CD8-positive, alpha-beta T cell (primary cell): ENCODE measurements at regions of chr15 and their contacts with region 1.

Region 1: DNA sequence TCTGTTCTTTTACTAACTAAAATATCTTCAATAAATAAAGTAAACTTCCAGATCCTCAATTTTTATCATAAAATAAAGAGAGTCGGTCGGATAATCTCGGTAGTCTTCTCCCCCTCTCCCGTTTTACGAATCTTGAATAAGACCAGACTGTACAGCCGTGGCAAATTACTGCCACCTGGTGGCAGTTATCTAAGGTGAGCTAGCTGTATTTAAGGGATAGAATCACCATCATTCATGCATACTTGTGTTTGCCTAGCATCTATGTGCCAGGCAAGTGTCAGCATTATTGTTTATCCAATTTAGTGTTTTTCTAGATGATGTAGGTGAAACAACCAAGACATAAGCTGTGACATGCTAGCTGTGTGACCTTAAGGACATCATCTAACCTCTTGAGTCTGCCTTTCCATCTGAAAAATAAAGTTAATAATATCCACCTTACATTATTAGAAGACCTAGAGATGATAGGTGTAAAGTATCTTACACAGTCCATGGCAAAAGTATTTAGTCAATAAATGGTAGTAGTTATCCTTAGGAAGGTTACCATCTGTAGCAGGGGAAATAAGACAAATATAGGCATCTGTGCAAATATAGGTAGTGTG is 21.3 kb downstream of the DUT start:
- DNase-seq: peak; percentile 8 to 74 (median 49)
- ATAC-seq: peak; percentile 70
- H3K4me3 ChIP-seq: no peak overlapping the region
- H3K4me3 Mint-ChIP-seq: no peak overlapping the region
- H3K27ac ChIP-seq: no peak overlapping the region
- H3K27ac Mint-ChIP-seq: no peak overlapping the region
- H3K4me1 ChIP-seq: no peaks in the 10 kb centered on the region
- H3K4me1 Mint-ChIP-seq: peaks cover 2% of the 10 kb centered on the region
- H3K27me3 ChIP-seq: no peaks in the 10 kb centered on the region
- H3K27me3 Mint-ChIP-seq: peaks cover 6% of the 10 kb centered on the region
- CTCF ChIP-seq: peak; percentile 75

Region 2: DNA sequence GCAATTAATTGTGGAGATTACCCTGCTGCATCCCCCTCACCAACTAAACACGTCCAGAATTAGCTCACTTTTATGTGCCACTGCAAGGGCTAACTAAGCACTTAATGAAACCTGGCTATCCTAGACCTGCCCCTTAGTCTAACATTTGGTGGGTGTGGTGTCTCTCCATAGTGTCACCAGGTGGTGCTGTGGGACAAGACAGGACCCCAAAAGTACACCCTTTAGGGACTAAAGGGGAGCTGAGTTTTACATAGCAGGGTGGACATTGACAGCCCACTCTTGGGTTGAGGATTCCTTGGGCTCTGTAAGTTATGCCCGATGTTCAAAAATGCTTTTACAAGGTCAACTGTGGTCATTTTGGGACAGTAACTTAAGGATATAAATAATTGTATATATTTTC is 15.6 kb before region 1 on chr15:
- CTCF ChIA-PET with region 1: interaction called, 28 read pairs
- POLR2A ChIA-PET with region 1: no interaction called
- intact Hi-C with region 1: loop called (anchors 1 kb)
- DNase-seq: peak in 4 of 9 experiments; percentile 12 to 48 (median 26)
- ATAC-seq: peak; percentile 48
- H3K4me3 ChIP-seq: no peak overlapping the region
- H3K4me3 Mint-ChIP-seq: no peak overlapping the region
- H3K27ac ChIP-seq: no peak overlapping the region
- H3K27ac Mint-ChIP-seq: peak overlapping the region; percentile 18
- H3K4me1 ChIP-seq: peaks cover 5% of the 10 kb centered on the region
- H3K4me1 Mint-ChIP-seq: peaks cover 12% of the 10 kb centered on the region
- H3K27me3 ChIP-seq: no peaks in the 10 kb centered on the region
- H3K27me3 Mint-ChIP-seq: no peaks in the 10 kb centered on the region
- CTCF ChIP-seq: no peak

Region 3: DNA sequence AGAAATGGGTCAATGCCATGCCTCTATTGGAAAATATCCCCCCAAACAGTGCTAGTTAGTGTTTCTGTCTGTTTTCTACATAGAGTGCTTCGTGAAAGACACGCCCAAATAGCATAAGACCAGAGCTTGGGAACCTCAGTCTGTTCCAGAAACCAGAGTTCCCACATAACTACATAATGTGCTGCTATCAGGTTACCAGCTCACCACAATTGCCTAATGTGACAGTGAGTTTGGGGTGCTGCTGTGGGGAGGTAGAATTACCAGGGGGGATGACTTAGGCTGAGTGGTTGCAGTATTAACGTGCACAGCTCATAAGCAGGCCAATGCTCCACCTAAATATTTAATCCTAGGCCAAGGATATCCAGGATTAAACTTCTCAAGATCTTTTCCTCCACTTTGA is 17.9 kb after region 1 on chr15:
- CTCF ChIA-PET with region 1: interaction called, 11 read pairs
- POLR2A ChIA-PET with region 1: no interaction called
- intact Hi-C with region 1: no loop called
- DNase-seq: no peak
- ATAC-seq: no peak
- H3K4me3 ChIP-seq: no peak overlapping the region
- H3K4me3 Mint-ChIP-seq: no peak overlapping the region
- H3K27ac ChIP-seq: no peak overlapping the region
- H3K27ac Mint-ChIP-seq: no peak overlapping the region
- H3K4me1 ChIP-seq: no peaks in the 10 kb centered on the region
- H3K4me1 Mint-ChIP-seq: no peaks in the 10 kb centered on the region
- H3K27me3 ChIP-seq: peaks cover 0 to 2% of the 10 kb centered on the region in 2 experiments
- H3K27me3 Mint-ChIP-seq: peaks cover 28% of the 10 kb centered on the region
- CTCF ChIP-seq: no peak